Sigmoid colon (tissue), 7 donors: ENCODE measurements at regions of chr2 and their contacts with region 1.

Region 1: DNA sequence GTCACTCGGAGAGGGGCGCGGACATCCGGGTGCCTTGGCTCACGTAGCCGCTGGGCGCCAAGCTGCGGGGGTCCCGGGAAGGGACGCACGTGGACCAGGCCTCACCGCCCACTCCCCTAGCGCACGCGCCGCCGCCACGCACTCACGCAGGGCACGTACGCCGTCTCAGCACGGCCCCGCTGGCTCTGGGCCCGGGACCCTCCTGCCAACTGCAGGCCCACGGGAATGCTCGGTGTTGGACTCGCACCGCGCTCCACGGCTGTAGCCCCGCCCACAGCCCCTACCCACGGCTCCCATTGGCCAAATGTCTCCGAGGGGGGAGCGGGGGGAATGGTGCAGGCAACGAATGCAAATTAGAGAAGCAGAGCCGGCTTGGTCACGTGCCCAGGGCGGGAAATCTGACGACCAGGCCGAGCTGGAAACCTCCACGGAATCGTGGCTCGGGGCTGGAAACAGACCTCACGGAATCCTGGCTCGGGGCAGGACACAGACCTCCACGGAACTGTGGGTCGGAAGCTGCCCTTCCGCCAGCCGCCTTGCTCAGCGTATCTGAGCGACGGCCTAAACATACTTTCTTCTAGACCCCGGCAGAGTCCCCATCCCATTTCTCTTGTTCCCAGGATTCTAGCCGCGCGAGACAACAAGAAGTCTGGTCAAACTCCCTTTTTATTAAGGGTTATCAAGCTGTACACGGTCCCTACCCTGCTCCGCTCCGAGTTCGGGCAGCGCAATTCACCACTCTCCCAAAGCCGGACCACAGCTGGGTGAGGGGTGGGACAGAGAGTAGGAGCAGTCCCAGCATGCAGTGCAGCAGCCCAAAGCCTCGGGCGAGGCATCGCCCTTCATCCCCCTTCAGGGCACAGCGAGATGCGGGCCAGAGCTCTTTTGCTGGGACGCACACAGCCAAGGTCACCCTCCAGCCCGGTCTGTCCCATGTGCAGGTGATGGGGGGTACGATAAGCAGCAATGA is at the start of gene ABCB6:
- DNase-seq: peak; percentile 99
- H3K4me3 ChIP-seq: peak within 1 kb of the TSS; percentile 41 to 62 (median 54)
- H3K27ac ChIP-seq: peak within 1 kb of the TSS; percentile 84 to 98 (median 96)
- H3K4me1 ChIP-seq: peaks cover 0 to 37% (median 32%) of the 10 kb centered on the region in 4 donors
- H3K27me3 ChIP-seq: no peaks in the 10 kb centered on the region
- CTCF ChIP-seq: no peak
- EP300 ChIP-seq: no peak
- POLR2A ChIP-seq: peak in 1 of 2 donors; percentile 47
- total RNA-seq, gene ABCB6: 11.8 to 23.0 (median 16.1) TPM

Region 2: GRCh38 chr2:219206442-219207253 is 12.4 kb before region 1 on chr2 and contains the start of gene ZFAND2B:
- intact Hi-C with region 1: loop called (anchors 1 kb)
- DNase-seq: peak; percentile 97
- H3K4me3 ChIP-seq: peak within 1 kb of the TSS; percentile 62 to 76 (median 68)
- H3K27ac ChIP-seq: peak within 1 kb of the TSS; percentile 93 to 97 (median 96)
- H3K4me1 ChIP-seq: peaks cover 0 to 22% (median 19%) of the 10 kb centered on the region in 4 donors
- H3K27me3 ChIP-seq: no peaks in the 10 kb centered on the region
- CTCF ChIP-seq: peak in 3 of 4 experiments; percentile 4 to 24 (median 9)
- EP300 ChIP-seq: no peak
- POLR2A ChIP-seq: peak; percentile 90 to 96
- total RNA-seq, gene ZFAND2B: 26.9 to 55.8 (median 45.6) TPM

Region 3: GRCh38 chr2:219461061-219461514 is 242.1 kb after region 1 on chr2:
- intact Hi-C with region 1: no loop called
- DNase-seq: peak; percentile 89
- H3K4me3 ChIP-seq: peak overlapping the region; percentile 4 to 46 (median 38)
- H3K27ac ChIP-seq: peak overlapping the region; percentile 96 to 99 (median 99)
- H3K4me1 ChIP-seq: peaks cover 0 to 98% (median 91%) of the 10 kb centered on the region in 4 donors
- H3K27me3 ChIP-seq: no peaks in the 10 kb centered on the region
- CTCF ChIP-seq: no peak
- EP300 ChIP-seq: peak in 1 of 4 donors; percentile 47
- POLR2A ChIP-seq: no peak